Caki2 (cell line): ENCODE measurements at regions of chr1 and their contacts with region 1.

Region 1: DNA sequence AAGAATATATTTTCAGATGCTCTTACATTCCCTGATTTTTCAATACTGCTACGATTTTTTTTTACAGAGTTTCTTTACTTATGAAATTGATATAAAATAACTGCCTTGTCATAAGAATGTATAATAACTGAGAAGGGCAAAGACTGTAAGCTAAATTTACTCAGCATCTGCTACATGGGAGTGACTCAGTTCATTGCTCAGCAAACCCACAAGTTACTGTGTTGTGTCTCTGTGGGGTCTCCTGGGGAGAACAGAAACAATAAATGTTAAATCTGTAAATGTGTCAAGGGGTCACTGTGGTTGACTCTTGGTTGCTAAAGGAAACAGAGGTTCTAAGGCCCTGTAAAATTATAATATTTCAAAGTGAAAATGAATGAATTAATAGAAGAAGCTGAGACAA is 210.3 kb upstream of the CACYBP start:
- DNase-seq: peak; percentile 46

Region 2: GRCh38 chr1:174153085-174153825 is 636.1 kb before region 1 on chr1:
- in situ Hi-C with region 1: no loop called
- DNase-seq: no peak

Region 3: DNA sequence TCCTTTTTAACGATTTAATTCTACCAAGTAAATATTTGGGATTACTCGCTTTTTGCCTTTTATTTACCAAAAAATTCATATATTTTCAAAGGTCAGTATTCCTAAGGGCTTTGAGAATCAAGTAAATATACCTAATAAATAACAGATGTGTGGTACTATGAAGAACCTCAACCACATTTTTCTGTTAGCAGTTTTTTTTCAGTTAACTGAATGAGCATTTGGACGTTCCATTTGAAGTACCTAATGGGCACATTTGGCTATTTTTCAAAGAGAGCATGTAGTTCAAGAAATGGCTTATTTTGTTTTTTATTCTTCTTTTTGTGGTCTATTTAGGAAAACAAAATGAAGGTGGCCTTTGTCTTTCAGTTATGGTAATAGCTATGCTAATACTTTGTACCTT is 88.6 kb before region 1 on chr1:
- in situ Hi-C with region 1: no loop called
- DNase-seq: no peak

Region 4: DNA sequence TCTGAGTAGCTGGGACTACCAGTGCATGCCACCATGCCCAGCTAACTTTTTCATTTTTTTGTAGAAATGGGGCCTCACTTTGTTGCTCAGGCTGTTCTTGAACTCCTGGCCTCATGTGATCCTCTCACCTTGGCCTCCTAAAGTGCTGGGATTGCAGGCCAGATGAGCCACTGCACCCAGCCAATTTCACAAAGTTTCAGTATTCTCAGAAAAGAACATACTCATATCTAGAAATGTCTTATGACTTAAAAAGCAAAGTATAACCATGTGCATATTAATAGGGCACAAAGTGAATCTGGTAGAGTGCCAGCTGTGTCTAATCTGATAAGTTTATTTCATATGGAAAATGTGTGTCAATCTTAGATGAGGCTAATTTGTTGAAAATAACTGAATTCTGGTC is 122.9 kb after region 1 on chr1:
- in situ Hi-C with region 1: no loop called
- DNase-seq: no peak

Region 5: GRCh38 chr1:174999926-175000696 is 210.7 kb after region 1 on chr1 and contains the start of gene CACYBP:
- in situ Hi-C with region 1: loop called (anchors 5 kb)
- DNase-seq: no peak
- total RNA-seq, gene CACYBP: 120 and 196 TPM in 2 replicates